ENCODE measurements at regions of chr17 and their contacts with region 1.

Region 1: DNA sequence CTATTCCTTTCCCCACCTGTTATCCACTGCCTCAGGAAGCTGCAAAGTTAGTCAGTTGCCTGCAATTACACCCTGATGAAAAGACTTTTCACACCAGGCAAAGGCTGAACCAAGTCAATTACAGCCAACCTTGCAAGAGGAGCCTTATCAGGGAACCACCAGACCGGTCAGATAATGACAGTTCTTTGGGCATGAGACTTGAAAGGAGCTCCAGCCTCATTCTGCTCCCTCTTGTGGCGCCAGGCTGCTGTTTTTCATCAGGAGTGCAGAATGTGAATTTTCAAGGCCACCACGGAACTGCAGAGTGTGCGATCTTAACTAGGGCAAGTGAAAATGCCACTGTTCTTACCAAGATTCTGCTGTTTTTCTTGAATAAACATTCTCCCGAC is 22.5 kb downstream of the DNAI2 start:
- H3K4me3 Mint-ChIP-seq: no peak overlapping the region
- H3K27ac Mint-ChIP-seq: no peak overlapping the region
- H3K4me1 Mint-ChIP-seq: peaks cover 20% of the 10 kb centered on the region
- H3K27me3 Mint-ChIP-seq: peaks cover 15% of the 10 kb centered on the region

Region 2: GRCh38 chr17:74354123-74354522 is 57.6 kb after region 1 on chr17:
- intact Hi-C with region 1: loop called (anchors 1 kb)
- H3K4me3 Mint-ChIP-seq: no peak overlapping the region
- H3K27ac Mint-ChIP-seq: no peak overlapping the region
- H3K4me1 Mint-ChIP-seq: peaks cover 8% of the 10 kb centered on the region
- H3K27me3 Mint-ChIP-seq: peaks cover 95% of the 10 kb centered on the region

Region 3: GRCh38 chr17:75601057-75602051 is 1304.8 kb after region 1 on chr17:
- intact Hi-C with region 1: no loop called
- H3K4me3 Mint-ChIP-seq: no peak overlapping the region
- H3K27ac Mint-ChIP-seq: no peak overlapping the region
- H3K4me1 Mint-ChIP-seq: peaks cover 27% of the 10 kb centered on the region
- H3K27me3 Mint-ChIP-seq: no peaks in the 10 kb centered on the region

Measured in dendritic cell treated with granulocyte-macrophage colony-stimulating factor and Interleukin-4, amounts not matched to agents 40 ng/mL and 50 ng/mL, for 4 days (primary cell).